PC-3 (cell line): ENCODE measurements at regions of chr10 and their contacts with region 1.

Region 1: DNA sequence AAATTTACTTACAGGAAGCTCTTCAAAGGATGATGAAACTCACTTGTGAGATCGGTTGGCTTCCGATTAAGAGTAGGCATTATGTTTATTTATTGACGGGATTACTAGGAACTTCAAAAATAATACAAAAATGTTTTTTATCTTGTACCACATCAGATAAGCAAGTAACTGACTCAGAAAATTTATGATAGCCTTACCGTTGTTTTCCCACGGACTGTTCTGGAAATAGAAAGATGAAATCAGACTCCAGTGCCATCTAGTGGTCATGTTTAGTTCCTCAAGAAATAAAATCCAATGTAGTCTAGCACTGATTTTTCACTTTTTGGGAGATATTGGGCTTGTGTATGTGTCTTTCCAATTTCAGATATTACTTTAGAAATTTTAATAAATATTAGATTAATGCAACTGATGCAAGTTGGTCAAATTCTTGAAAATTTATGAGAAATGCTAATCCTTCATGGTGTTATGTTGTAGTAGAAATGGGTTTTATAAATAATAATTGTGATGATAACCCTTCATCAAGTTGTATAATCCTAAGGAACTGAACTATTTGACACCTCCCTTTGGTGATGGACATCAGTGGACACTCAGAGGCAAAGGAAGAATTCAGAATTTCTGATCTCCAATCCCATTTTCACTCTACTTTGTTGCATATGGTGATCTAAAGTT is 168.8 kb downstream of the TMEM26 start:
- DNase-seq: peak; percentile 98
- ATAC-seq: peak; percentile 66
- H3K4me3 ChIP-seq: peak overlapping the region; percentile 13
- H3K27ac ChIP-seq: no peak overlapping the region
- H3K4me1 ChIP-seq: peaks cover 13% of the 10 kb centered on the region
- H3K27me3 ChIP-seq: no peaks in the 10 kb centered on the region
- CTCF ChIP-seq: peak; percentile 99

Region 2: GRCh38 chr10:60816628-60817397 is 467.5 kb before region 1 on chr10:
- CTCF ChIA-PET with region 1: no interaction called
- POLR2A ChIA-PET with region 1: no interaction called
- intact Hi-C with region 1: loop called (anchors 1 kb)
- DNase-seq: peak; percentile 97
- ATAC-seq: peak; percentile 93
- H3K4me3 ChIP-seq: no peak overlapping the region
- H3K27ac ChIP-seq: no peak overlapping the region
- H3K4me1 ChIP-seq: peaks cover 6% of the 10 kb centered on the region; the same call in 1 of the 2 replicates
- H3K27me3 ChIP-seq: no peaks in the 10 kb centered on the region
- CTCF ChIP-seq: peak; percentile 100

Region 3: DNA sequence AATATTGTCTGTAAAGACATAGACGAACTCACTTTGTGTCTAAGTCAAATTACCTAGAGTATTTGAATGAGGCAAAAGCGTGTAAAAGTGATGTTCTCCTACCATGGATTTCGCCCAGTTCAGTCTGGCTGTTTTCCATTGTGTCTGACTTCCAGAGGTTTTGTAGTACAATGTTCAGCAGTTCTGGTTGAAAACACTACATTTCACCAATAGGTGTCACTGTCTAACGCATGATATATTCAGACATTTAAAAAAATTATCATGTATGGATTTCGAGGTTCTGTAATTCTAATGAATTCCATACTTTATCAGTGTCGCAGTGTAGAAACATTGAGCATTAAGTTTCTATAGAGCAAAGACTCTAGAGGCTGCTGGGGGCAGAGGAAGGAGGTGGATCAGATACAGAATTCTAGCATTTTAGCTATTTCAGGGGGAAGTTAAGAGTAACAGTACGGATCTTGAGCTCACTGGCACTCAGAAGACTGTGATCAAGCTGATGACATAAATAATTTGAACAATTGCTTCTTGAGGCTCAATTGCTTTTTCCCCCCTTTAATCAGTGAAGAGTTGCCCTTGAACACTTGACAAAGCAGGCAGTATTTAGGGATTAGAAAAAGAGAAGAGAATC is 143.5 kb before region 1 on chr10:
- CTCF ChIA-PET with region 1: no interaction called
- POLR2A ChIA-PET with region 1: no interaction called
- intact Hi-C with region 1: loop called (anchors 1 kb)
- DNase-seq: peak; percentile 96
- ATAC-seq: peak; percentile 83
- H3K4me3 ChIP-seq: no peak overlapping the region
- H3K27ac ChIP-seq: no peak overlapping the region
- H3K4me1 ChIP-seq: peaks cover 11% of the 10 kb centered on the region
- H3K27me3 ChIP-seq: no peaks in the 10 kb centered on the region
- CTCF ChIP-seq: peak; percentile 99

Region 4: DNA sequence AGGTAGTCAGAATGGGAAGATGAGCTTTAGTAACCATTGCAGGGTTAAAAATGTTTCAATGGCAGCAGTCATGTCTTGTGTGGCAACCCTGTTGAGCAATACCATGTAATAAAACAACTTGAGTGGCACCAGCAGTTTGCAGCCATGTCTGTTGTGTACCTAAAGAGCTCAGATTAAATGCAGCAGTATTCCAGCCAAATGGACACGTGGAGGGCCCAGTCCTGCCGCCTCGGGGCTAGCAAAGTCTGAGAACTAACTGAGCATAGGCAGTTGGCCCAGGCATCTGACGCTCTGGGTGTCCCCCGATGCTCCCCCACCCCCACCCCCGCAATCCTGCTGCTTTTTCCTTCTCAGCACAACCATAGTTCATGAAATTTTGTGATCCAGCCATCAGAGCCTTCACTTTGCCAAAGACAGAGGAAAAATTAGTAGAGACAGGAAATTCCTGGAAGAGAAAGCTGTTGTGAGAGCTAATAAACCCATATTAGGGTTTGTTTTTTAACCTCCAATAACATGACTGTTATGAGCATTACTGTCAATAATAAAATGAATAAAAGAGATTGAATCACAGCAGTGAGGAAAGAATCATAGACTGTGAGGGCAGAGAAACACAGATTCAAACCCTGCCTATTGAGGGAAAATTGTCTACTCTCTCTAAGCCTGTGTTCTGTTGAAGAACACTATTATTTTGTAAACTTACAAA is 119.7 kb before region 1 on chr10:
- CTCF ChIA-PET with region 1: interaction called, 4 read pairs
- POLR2A ChIA-PET with region 1: no interaction called
- intact Hi-C with region 1: loop called (anchors 1 kb)
- DNase-seq: peak; percentile 88
- ATAC-seq: peak; percentile 80
- H3K4me3 ChIP-seq: no peak overlapping the region
- H3K27ac ChIP-seq: no peak overlapping the region
- H3K4me1 ChIP-seq: peaks cover 8% of the 10 kb centered on the region; the same call in 1 of the 2 replicates
- H3K27me3 ChIP-seq: no peaks in the 10 kb centered on the region
- CTCF ChIP-seq: no peak

Region 5: DNA sequence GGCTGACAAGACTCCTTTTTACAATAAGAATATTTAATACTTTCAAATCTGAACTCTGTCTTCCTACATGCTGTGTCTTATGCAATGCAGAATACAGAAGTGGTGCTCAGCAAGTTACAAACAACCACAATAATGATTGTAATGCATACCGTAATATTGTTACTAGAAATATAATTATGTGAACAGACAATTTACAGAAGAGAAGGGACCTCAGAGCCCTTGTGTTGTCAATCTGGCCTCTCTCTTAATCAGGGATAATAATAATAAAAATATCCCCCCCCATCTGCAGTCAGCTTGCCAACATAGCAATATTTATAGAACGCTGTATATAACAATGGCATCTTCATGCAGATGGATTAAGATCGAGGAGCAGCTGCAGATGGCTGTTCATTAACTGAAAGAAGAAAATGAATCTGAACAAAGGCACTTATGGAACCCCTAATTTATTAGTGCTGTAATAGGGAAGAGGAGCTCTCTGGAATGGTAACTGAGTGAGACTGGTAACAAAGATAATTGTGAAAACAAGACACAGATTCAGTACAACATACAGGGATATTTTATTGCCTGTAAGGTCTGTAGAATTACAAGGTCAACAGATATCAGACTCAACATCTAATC is 62.5 kb after region 1 on chr10:
- CTCF ChIA-PET with region 1: no interaction called
- POLR2A ChIA-PET with region 1: no interaction called
- intact Hi-C with region 1: no loop called
- DNase-seq: no peak
- ATAC-seq: no peak
- H3K4me3 ChIP-seq: no peak overlapping the region
- H3K27ac ChIP-seq: no peak overlapping the region
- H3K4me1 ChIP-seq: no peaks in the 10 kb centered on the region
- H3K27me3 ChIP-seq: peaks cover 14% of the 10 kb centered on the region
- CTCF ChIP-seq: no peak

Region 6: DNA sequence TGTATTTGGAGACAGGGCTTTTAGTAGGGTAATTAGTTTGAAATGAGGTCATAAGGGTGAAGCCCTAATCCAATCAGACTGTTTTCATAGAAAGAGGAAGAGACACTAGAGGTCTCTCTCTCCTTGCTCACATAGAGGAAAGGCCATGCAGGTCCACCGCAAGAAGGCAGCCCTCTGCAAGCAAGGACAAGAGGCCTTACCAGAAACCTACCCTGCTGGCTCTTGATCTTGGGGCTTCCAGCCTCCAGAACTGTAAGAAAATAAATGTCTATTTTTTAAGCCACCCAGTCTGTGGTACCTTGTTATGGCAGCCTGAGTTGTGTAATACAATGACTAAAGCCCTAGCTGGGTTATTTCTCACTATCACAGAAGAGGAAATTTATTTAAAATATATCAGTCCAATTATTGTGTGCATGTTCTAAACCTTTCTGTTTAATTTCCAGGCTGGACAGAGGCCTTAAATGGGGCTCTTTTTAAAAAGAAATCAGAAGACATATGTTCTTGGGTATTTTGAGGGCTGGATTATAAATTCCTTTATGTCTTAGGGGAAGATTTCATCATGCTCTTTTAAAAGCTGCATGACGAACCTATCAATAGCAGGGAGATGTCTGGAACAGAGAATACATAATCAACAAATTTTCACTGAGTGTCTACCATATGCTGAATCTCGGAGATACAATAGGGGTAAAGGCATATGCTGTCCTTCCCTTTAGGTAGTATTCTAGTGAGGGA is 181.7 kb after region 1 on chr10:
- CTCF ChIA-PET with region 1: no interaction called
- POLR2A ChIA-PET with region 1: no interaction called
- intact Hi-C with region 1: loop called (anchors 5 kb)
- DNase-seq: no peak
- ATAC-seq: no peak
- H3K4me3 ChIP-seq: no peak overlapping the region
- H3K27ac ChIP-seq: no peak overlapping the region
- H3K4me1 ChIP-seq: peaks cover 29% of the 10 kb centered on the region
- H3K27me3 ChIP-seq: no peaks in the 10 kb centered on the region
- CTCF ChIP-seq: peak; percentile 53

Region 7: DNA sequence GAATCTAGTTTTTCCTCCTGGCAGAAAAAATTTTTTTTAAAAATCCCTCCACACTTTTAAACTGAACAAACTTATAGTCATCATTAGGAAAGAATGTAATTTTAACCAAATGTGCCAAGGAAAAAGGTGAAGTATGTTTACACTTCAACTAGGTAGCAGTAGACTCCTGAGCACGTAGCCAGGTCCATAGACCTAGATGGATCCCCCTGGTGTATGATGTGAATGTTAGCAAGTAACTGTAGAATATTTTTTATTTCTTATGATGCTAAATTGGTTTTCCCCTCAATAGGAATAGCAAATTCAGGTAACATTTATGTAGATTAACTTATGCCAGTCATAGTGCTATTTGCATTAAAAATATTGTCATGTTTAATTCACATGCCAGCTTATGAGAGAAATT is 398.0 kb after region 1 on chr10:
- CTCF ChIA-PET with region 1: no interaction called
- POLR2A ChIA-PET with region 1: no interaction called
- intact Hi-C with region 1: loop called (anchors 5 kb)
- DNase-seq: peak; percentile 57
- ATAC-seq: peak; percentile 91
- H3K4me3 ChIP-seq: no peak overlapping the region
- H3K27ac ChIP-seq: no peak overlapping the region
- H3K4me1 ChIP-seq: no peaks in the 10 kb centered on the region
- H3K27me3 ChIP-seq: no peaks in the 10 kb centered on the region
- CTCF ChIP-seq: peak; percentile 74